ENCODE measurements at regions of chr22 and their contacts with region 1.

Region 1: DNA sequence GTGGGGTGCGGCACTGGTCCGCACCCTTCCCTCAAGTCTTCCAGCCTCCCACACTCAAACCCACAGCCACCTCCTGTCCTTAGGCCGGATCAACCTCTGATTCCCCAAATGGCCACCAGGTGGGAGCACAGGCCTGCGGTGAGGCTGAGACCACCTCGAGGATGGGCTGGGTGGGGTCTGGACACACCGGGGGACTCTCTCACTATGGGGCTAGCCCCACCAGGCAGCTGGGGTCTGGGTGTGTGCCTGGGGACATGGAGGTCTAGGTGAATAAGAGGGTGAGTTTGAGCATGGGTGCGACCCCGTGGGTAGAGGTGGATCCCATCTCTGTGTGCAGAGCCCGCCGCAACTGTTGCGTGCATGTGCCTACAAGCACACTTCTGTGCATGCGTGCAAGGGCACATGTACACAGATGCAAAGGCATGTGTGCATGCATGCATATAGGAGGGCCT is 32.6 kb downstream of the MYO18B start:
- DNase-seq: no peak
- ATAC-seq: no peak
- H3K4me3 Mint-ChIP-seq: no peak overlapping the region
- H3K27ac Mint-ChIP-seq: no peak overlapping the region
- H3K4me1 Mint-ChIP-seq: peaks cover 27% of the 10 kb centered on the region
- H3K27me3 Mint-ChIP-seq: peaks cover 6% of the 10 kb centered on the region

Region 2: GRCh38 chr22:25447686-25448434 is 326.7 kb before region 1 on chr22:
- CTCF ChIA-PET with region 1: interaction called, 12 read pairs
- POLR2A ChIA-PET with region 1: no interaction called
- DNase-seq: peak; percentile 94
- ATAC-seq: peak; percentile 92
- H3K4me3 Mint-ChIP-seq: peak overlapping the region; percentile 91
- H3K27ac Mint-ChIP-seq: peak overlapping the region; percentile 91
- H3K4me1 Mint-ChIP-seq: peaks cover 44% of the 10 kb centered on the region
- H3K27me3 Mint-ChIP-seq: no peaks in the 10 kb centered on the region

Region 3: GRCh38 chr22:25540166-25540907 is 234.3 kb before region 1 on chr22:
- CTCF ChIA-PET with region 1: interaction called, 58 read pairs
- POLR2A ChIA-PET with region 1: interaction called, 3 read pairs
- DNase-seq: no peak
- ATAC-seq: no peak
- H3K4me3 Mint-ChIP-seq: no peak overlapping the region
- H3K27ac Mint-ChIP-seq: no peak overlapping the region
- H3K4me1 Mint-ChIP-seq: peaks cover 15% of the 10 kb centered on the region
- H3K27me3 Mint-ChIP-seq: no peaks in the 10 kb centered on the region

Region 4: DNA sequence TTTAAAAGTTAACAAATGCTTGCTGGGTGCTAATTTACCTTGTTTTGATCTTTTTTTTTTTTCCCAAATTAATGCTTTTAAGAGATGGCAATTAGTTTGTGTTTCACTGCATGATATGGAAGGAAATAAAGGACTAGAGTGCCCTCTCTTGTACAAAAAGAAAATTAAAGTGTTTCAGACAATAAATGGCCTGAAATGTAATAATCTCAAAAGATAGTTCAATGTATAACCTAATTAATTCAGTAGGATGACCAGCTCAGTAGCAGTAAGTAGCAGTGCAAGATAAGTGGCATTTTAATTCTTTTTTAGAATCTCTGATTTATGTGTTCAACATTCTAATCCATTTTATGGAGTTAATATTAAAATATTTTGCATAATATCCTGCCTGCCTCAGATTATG is 72.6 kb before region 1 on chr22:
- CTCF ChIA-PET with region 1: interaction called, 71 read pairs
- POLR2A ChIA-PET with region 1: no interaction called
- DNase-seq: no peak
- ATAC-seq: no peak
- H3K4me3 Mint-ChIP-seq: peak overlapping the region; percentile 9
- H3K27ac Mint-ChIP-seq: peak overlapping the region; percentile 70
- H3K4me1 Mint-ChIP-seq: peaks cover 51% of the 10 kb centered on the region
- H3K27me3 Mint-ChIP-seq: no peaks in the 10 kb centered on the region

Region 5: GRCh38 chr22:25749420-25750169 is 25.0 kb before region 1 on chr22:
- CTCF ChIA-PET with region 1: interaction called, 13 read pairs
- POLR2A ChIA-PET with region 1: no interaction called
- DNase-seq: peak; percentile 39
- ATAC-seq: peak; percentile 61
- H3K4me3 Mint-ChIP-seq: peak overlapping the region; percentile 36
- H3K27ac Mint-ChIP-seq: peak overlapping the region; percentile 89
- H3K4me1 Mint-ChIP-seq: peaks cover 57% of the 10 kb centered on the region
- H3K27me3 Mint-ChIP-seq: no peaks in the 10 kb centered on the region

Region 6: GRCh38 chr22:26330966-26331625 is 556.5 kb after region 1 on chr22:
- CTCF ChIA-PET with region 1: interaction called, 17 read pairs
- POLR2A ChIA-PET with region 1: no interaction called
- DNase-seq: peak; percentile 70
- ATAC-seq: peak; percentile 65
- H3K4me3 Mint-ChIP-seq: no peak overlapping the region
- H3K27ac Mint-ChIP-seq: no peak overlapping the region
- H3K4me1 Mint-ChIP-seq: no peaks in the 10 kb centered on the region
- H3K27me3 Mint-ChIP-seq: peaks cover 5% of the 10 kb centered on the region

Measured in activated CD8-positive, alpha-beta T cell treated with anti-CD3 and anti-CD28 coated beads, Interleukin-2, amount 10 ng/mL, durations not matched to agents 7 days and 5 days (primary cell).